ENCODE measurements at regions of chr1 and their contacts with region 1.

Region 1: DNA sequence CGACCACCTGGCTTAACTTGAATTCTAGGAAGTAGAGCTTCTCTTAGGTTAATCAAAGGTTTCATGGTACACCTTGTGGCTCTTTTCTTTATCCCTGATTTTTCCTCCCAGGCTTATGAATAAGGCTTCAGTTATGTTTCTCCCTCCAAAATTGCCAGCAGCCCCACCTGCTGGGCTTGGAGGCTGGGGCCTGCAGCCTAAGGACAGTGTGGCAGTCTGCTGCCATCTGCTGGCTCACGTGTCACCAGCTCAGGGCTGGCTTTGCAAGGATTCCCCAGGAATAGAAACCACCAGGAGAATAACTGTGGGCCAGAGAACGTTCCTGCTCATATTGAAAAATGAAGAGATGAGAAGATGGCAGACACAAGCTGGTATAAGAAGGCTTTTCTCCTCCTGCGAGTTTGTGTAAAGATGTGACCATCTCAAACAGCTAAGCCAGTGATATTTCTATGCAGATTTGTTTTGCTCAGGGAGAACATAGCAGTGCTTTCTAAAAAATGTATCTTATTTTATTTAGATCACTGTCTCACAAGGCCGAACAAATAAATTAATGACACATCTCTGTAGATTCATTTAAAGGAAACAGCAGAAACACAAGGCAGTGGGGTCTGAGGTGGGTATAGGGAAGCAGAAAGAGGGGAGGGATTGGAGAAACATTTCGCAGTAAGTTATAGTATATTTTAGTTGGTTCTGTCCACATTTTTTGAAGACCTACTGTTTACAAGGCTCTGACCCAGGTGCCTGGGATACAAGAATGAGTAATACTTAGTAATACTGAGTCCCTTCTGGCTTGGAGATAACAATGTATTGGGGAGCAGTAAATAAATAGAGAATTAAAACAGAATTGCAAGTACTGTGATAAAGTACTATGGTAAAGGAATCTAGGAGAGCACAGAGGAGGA is 291.1 kb upstream of the SGIP1 start:
- DNase-seq: peak; percentile 75
- ATAC-seq: peak; percentile 100
- H3K4me3 ChIP-seq: no peak overlapping the region
- H3K27ac ChIP-seq: no peak overlapping the region
- H3K4me1 ChIP-seq: no peaks in the 10 kb centered on the region
- H3K27me3 ChIP-seq: no peaks in the 10 kb centered on the region
- CTCF ChIP-seq: peak; percentile 97
- EP300 ChIP-seq: no peak
- POLR2A ChIP-seq: no peak
- RAD21 ChIP-seq: peak; percentile 90

Region 2: GRCh38 chr1:66197120-66197519 is 45.8 kb before region 1 on chr1:
- CTCF ChIA-PET with region 1: no interaction called
- POLR2A ChIA-PET with region 1: no interaction called
- in situ Hi-C with region 1: no loop called
- intact Hi-C with region 1: no loop called
- DNase-seq: no peak
- ATAC-seq: no peak
- H3K4me3 ChIP-seq: no peak overlapping the region
- H3K27ac ChIP-seq: no peak overlapping the region
- H3K4me1 ChIP-seq: no peaks in the 10 kb centered on the region
- H3K27me3 ChIP-seq: no peaks in the 10 kb centered on the region
- CTCF ChIP-seq: no peak
- EP300 ChIP-seq: no peak
- POLR2A ChIP-seq: no peak
- RAD21 ChIP-seq: no peak

Region 3: DNA sequence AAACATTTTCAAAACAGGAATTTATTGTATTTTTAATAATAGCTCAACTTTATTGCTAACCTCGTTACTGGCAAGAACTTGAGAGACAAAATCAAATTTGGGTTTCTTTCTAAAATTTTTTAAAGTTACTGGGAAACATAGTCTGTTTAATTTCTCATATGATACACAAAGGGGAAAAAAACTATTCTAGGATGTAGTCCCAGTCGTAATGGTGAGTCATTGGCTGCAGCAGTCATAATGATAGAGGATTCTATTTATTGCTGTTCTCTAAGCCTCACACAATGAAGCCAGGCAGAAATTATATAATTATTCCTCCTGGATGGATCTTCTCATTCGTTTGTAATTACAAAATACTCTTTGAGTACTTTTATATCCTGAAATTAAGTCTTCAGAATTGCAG is 35.4 kb before region 1 on chr1:
- CTCF ChIA-PET with region 1: no interaction called
- POLR2A ChIA-PET with region 1: no interaction called
- in situ Hi-C with region 1: no loop called
- intact Hi-C with region 1: no loop called
- DNase-seq: no peak
- ATAC-seq: no peak
- H3K4me3 ChIP-seq: no peak overlapping the region
- H3K27ac ChIP-seq: no peak overlapping the region
- H3K4me1 ChIP-seq: no peaks in the 10 kb centered on the region
- H3K27me3 ChIP-seq: no peaks in the 10 kb centered on the region
- CTCF ChIP-seq: no peak
- EP300 ChIP-seq: no peak
- POLR2A ChIP-seq: no peak
- RAD21 ChIP-seq: no peak

Region 4: DNA sequence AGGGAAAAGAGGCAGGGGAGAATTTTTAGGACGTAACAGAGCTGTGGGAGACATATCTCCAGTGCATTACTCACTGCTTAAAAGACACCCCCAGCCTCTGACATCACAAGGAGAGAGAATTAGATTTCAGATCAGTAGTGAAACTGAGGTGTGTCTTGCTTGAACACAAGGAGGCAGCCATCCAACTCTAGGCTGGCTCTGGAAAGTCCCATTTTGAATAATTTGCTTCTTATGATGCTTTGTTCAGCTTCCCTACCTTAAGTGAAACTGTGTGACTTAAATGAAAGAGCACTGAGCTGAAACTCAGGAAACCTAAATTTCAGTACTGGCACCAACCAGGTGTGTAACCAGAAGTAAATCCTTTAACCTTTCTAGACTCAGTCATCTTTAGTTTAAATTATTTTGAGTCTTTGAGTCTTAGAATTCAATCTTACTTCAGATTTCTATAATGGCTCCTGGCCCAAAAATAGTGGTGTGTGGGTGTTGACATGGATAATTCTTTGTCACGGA is 39.5 kb after region 1 on chr1:
- CTCF ChIA-PET with region 1: no interaction called
- POLR2A ChIA-PET with region 1: no interaction called
- in situ Hi-C with region 1: no loop called
- intact Hi-C with region 1: no loop called
- DNase-seq: no peak
- ATAC-seq: no peak
- H3K4me3 ChIP-seq: no peak overlapping the region
- H3K27ac ChIP-seq: no peak overlapping the region
- H3K4me1 ChIP-seq: no peaks in the 10 kb centered on the region
- H3K27me3 ChIP-seq: no peaks in the 10 kb centered on the region
- CTCF ChIP-seq: no peak
- EP300 ChIP-seq: no peak
- POLR2A ChIP-seq: no peak
- RAD21 ChIP-seq: no peak

Region 5: DNA sequence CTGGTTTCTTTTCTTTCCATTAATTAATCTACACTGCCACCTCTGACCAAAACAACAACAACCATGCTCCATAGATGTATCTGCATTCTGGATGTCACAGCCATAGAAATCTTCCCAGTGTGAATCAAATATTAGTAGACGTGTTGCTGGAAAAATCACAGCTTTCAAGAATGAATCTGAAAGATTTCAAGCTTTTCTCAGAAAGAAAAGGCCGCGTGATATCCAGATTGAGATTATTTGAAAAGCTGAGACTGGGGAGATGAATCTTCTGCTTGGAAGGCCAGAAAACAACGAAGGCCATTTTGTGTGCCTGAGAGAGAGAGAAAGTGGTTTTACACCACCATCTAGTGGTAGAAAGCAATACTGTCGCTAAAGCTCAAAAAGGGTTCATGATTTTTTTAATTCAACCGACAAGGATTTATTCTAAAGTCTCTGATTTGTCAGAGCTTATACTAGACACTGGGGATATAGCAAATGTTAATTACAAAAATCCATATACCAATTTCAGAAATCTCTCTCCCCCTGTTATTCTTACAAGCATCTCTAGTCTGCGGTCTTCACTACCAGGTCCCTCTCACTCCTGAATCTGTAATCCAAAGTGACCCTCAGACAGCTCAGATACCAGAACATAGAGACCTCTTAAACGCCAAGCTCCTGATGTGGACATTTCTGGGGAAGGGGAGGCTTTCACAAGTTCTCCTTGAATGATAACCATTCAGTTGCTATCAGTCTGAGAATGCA is 203.5 kb after region 1 on chr1:
- CTCF ChIA-PET with region 1: interaction called, 7 read pairs
- POLR2A ChIA-PET with region 1: no interaction called
- in situ Hi-C with region 1: no loop called
- intact Hi-C with region 1: loop called (anchors 2 kb)
- DNase-seq: peak; percentile 47
- ATAC-seq: peak; percentile 77; the same call in 2 of the 3 replicates
- H3K4me3 ChIP-seq: no peak overlapping the region
- H3K27ac ChIP-seq: no peak overlapping the region
- H3K4me1 ChIP-seq: no peaks in the 10 kb centered on the region
- H3K27me3 ChIP-seq: no peaks in the 10 kb centered on the region
- CTCF ChIP-seq: peak; percentile 78
- EP300 ChIP-seq: no peak
- POLR2A ChIP-seq: no peak
- RAD21 ChIP-seq: no peak